ENCODE measurements at regions of chr11 and their contacts with region 1.

Region 1: GRCh38 chr11:76744186-76745043 is 38.7 kb upstream of the TSKU start:
- DNase-seq: peak in 1 of 2 donors; percentile 81
- ATAC-seq: peak; percentile 58
- H3K4me3 ChIP-seq: no peak overlapping the region
- H3K27ac ChIP-seq: no peak overlapping the region
- H3K4me1 ChIP-seq: no peaks in the 10 kb centered on the region
- H3K27me3 ChIP-seq: no peaks in the 10 kb centered on the region

Region 2: DNA sequence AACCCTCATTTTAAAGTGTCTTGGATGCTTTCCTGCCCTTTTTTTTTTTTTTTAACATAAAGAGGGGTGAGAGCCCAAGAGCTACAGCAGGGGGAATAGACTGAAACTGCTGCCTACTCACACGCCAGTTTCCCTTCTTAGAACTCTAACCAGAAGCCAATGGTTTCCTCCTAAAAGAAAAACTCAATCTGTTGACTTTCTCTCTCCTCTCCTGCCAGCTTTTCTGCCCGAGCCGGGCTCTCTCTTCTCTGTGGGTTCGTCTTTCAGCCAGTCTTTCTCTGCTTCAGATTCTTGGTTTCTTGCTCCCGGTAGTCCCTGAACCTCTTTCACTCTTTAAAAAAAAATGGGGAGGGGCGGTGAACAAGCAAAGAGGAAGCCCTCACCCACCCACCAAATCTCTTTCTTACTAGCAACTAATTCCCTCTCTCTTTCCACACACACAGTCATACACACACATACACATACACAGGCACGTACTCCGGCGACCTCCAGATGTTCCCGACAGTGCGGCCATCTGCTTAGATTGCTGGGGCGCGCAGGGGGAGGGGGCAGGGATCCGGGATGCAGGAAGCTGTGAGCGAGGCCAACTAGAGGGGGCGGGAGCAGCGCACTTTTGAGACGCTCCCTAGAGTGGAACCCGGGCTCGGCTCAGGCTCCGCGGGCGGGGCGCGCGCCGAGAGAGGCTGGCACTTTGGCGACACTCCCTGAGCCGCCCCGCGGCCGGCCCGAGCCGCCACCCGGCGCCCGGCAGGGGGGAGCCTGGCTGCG is 38.3 kb after region 1 on chr11:
- intact Hi-C with region 1: loop called in 1 of 2 experiments (anchors 5 kb)
- DNase-seq: peak; percentile 92 to 94
- ATAC-seq: peak; percentile 86
- H3K4me3 ChIP-seq: peak overlapping the region; percentile 83 to 97
- H3K27ac ChIP-seq: peak overlapping the region; percentile 59 to 87
- H3K4me1 ChIP-seq: peaks cover 0 to 4% of the 10 kb centered on the region in 2 donors
- H3K27me3 ChIP-seq: no peaks in the 10 kb centered on the region